OCI-LY7 (cell line): ENCODE measurements at regions of chr14 and their contacts with region 1.

Region 1: GRCh38 chr14:22386924-22387775 is 201.9 kb downstream of the DAD1 start:
- DNase-seq: peak; percentile 93
- H3K4me3 ChIP-seq: peak overlapping the region; percentile 33
- H3K27ac ChIP-seq: peak overlapping the region; percentile 49
- H3K4me1 ChIP-seq: peaks cover 94% of the 10 kb centered on the region
- CTCF ChIP-seq: peak; percentile 94

Region 2: GRCh38 chr14:21822109-21822508 is 565.0 kb before region 1 on chr14:
- CTCF ChIA-PET with region 1: no interaction called
- POLR2A ChIA-PET with region 1: no interaction called
- intact Hi-C with region 1: no loop called
- DNase-seq: no peak
- H3K4me3 ChIP-seq: no peak overlapping the region
- H3K27ac ChIP-seq: no peak overlapping the region
- H3K4me1 ChIP-seq: no peaks in the 10 kb centered on the region
- CTCF ChIP-seq: no peak

Region 3: GRCh38 chr14:22168092-22168955 is 218.8 kb before region 1 on chr14:
- CTCF ChIA-PET with region 1: no interaction called
- POLR2A ChIA-PET with region 1: no interaction called
- intact Hi-C with region 1: no loop called
- DNase-seq: peak; percentile 5
- H3K4me3 ChIP-seq: no peak overlapping the region
- H3K27ac ChIP-seq: no peak overlapping the region
- H3K4me1 ChIP-seq: no peaks in the 10 kb centered on the region
- CTCF ChIP-seq: 0 out of 2 replicates have a peak, but pooled peaks have one; percentile 40

Region 4: GRCh38 chr14:22341049-22341448 is 46.1 kb before region 1 on chr14:
- CTCF ChIA-PET with region 1: no interaction called
- POLR2A ChIA-PET with region 1: no interaction called
- intact Hi-C with region 1: no loop called
- DNase-seq: no peak
- H3K4me3 ChIP-seq: no peak overlapping the region
- H3K27ac ChIP-seq: no peak overlapping the region
- H3K4me1 ChIP-seq: no peaks in the 10 kb centered on the region
- CTCF ChIP-seq: no peak

Region 5: DNA sequence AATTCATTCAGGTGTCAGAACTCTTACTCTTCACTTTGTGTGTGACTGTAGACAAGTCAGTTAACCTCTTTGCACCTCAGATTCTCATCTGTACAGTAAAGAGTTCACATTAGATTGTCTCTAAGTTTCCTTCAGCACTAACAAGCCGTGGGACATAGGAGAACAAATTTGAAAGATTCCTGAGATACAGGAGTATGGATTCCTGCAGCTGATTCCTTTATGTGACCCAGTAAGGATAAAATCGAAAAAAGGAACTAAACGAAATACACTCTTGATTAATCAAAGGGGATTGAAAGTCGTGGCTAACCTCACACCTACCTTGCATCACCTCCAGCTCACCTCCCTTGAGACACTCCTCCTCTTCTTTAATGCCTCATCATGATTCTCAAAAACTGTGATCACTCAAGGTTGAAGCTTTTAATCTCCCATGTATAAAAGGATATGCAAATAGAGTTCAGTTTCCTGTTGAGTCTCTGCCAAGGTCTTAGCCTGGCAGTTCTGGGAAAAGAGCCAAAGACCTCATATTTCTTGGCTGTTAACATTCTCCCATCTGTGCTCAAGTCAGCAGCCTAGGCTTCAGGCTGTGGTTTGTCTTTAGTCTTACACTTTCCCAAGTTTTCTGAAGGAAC is 45.3 kb after region 1 on chr14:
- CTCF ChIA-PET with region 1: interaction called, 11 read pairs
- POLR2A ChIA-PET with region 1: interaction called, 44 read pairs
- intact Hi-C with region 1: loop called (anchors 1 kb)
- DNase-seq: peak; percentile 94
- H3K4me3 ChIP-seq: peak overlapping the region; percentile 61
- H3K27ac ChIP-seq: peak overlapping the region; percentile 97
- H3K4me1 ChIP-seq: peaks cover 88% of the 10 kb centered on the region
- CTCF ChIP-seq: no peak

Region 6: GRCh38 chr14:22478670-22479069 is 91.5 kb after region 1 on chr14:
- CTCF ChIA-PET with region 1: interaction called, 80 read pairs
- POLR2A ChIA-PET with region 1: interaction called, 55 read pairs
- intact Hi-C with region 1: loop called (anchors 1 kb)
- DNase-seq: no peak
- H3K4me3 ChIP-seq: peak overlapping the region; percentile 53
- H3K27ac ChIP-seq: peak overlapping the region; percentile 81
- H3K4me1 ChIP-seq: peaks cover 100% of the 10 kb centered on the region
- CTCF ChIP-seq: no peak

Region 7: GRCh38 chr14:22822571-22823098 is 435.5 kb after region 1 on chr14:
- CTCF ChIA-PET with region 1: no interaction called
- POLR2A ChIA-PET with region 1: interaction called, 4 read pairs
- intact Hi-C with region 1: loop called (anchors 2 kb)
- DNase-seq: peak; percentile 83
- H3K4me3 ChIP-seq: peak overlapping the region; percentile 58
- H3K27ac ChIP-seq: peak overlapping the region; percentile 82
- H3K4me1 ChIP-seq: peaks cover 78% of the 10 kb centered on the region
- CTCF ChIP-seq: peak; percentile 90